ENCODE measurements at regions of chr2 and their contacts with region 1.

Region 1: GRCh38 chr2:178796079-178796677 is 11.0 kb downstream of the TTN start:
- DNase-seq: peak in 1 of 2 experiments; percentile 65
- H3K4me3 ChIP-seq: no peak overlapping the region
- H3K27ac ChIP-seq: no peak overlapping the region
- H3K4me1 ChIP-seq: no peaks in the 10 kb centered on the region
- H3K27me3 ChIP-seq: no peaks in the 10 kb centered on the region
- CTCF ChIP-seq: peak; percentile 97

Region 2: DNA sequence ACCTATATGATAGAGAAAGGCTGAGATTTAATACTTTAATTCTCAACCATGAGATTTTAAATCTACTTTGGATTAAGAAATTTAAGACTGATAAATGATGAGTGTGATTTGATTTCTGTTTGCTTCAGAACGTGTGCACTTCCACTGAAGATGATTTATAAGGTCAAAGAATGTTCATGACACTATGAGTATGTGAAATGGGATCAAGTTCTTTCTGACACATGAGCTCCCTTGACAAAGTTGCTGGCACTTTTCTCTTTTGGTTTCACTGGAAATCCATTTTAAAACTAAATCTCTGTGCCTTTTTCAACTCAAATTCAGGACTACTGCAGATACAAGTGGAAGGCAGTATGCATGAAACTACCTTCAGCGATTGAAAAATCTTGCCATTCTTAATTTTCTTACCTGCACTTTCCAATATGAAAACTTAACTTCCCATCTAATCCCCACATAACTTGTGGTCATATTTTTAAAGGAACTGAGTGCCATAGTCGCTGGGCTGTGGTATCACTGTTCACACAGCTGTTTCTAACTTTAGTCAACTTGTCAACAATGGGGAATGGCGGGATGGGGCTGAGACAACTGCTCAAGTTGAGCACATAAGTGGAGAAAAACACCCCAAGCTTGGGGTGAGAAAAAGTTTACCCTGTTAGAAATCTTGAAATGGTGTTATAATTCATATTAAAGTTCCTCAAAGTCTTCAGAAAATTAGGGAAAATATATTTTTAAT is 62.9 kb after region 1 on chr2:
- CTCF ChIA-PET with region 1: no interaction called
- POLR2A ChIA-PET with region 1: no interaction called
- intact Hi-C with region 1: no loop called
- DNase-seq: no peak
- H3K4me3 ChIP-seq: no peak overlapping the region
- H3K27ac ChIP-seq: no peak overlapping the region
- H3K4me1 ChIP-seq: peaks cover 10% of the 10 kb centered on the region
- H3K27me3 ChIP-seq: no peaks in the 10 kb centered on the region
- CTCF ChIP-seq: no peak

Region 3: DNA sequence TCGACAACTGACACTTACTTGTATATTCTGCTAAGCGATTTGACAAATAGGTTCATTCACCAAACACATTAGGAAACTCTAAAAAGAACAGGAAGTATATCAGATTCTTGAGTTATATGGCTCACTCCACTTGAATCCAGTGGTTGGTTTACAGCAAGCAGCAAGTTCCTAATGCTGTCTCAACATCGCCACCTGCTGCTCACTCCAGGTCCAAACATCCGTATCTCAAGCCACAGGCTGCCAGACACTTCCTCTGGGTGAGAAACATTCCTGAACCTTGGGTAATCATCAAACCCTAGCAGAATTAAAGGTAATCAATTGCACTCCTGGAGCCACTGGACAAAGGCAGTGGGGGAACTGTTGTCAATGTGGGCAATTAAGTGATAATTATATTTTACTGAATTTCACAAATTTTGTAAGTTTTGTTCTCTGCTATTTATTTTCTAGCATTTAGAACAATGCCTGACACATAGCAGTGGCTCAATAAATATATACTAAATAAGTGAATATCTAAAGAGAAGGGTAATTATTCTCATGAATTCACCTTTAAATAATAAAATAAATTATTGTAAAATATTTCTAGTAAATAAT is 118.2 kb after region 1 on chr2:
- CTCF ChIA-PET with region 1: interaction called, 5 read pairs
- POLR2A ChIA-PET with region 1: no interaction called
- intact Hi-C with region 1: loop called (anchors 1 kb)
- DNase-seq: peak; percentile 83 to 84
- H3K4me3 ChIP-seq: no peak overlapping the region
- H3K27ac ChIP-seq: no peak overlapping the region
- H3K4me1 ChIP-seq: peaks cover 30% of the 10 kb centered on the region
- H3K27me3 ChIP-seq: no peaks in the 10 kb centered on the region
- CTCF ChIP-seq: peak; percentile 99

Region 4: DNA sequence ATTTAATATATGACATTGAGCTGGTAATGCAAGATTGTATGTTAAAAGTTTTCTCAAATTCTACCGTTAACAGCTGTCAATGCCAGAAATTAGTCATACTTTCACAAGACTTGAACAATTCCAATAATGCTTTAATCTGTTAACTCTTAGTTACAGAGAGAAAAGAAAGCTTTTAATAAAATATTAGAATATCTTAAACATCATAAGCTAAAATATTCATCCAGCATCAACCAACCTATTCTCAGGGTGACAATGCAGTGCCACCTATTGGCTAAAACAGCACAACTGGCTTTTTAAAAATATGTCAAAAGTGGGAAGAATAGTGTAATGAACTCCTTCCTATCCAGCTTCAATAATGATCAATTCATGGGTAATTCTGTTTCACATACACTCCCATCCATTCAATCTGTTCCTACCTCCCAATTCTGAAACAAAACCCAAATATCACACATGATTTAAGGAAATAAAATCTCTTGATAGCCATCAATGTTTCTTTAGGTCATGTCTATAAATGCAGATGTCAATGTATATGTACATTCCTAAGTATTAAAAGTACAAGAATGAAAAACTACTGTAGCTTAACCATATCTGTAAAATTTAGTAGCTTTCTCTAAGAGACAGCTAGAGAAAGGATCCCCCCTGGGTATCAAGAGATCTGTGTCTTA is 333.5 kb after region 1 on chr2:
- CTCF ChIA-PET with region 1: interaction called, 9 read pairs
- POLR2A ChIA-PET with region 1: no interaction called
- intact Hi-C with region 1: loop called (anchors 5 kb)
- DNase-seq: no peak
- H3K4me3 ChIP-seq: no peak overlapping the region
- H3K27ac ChIP-seq: no peak overlapping the region
- H3K4me1 ChIP-seq: no peaks in the 10 kb centered on the region
- H3K27me3 ChIP-seq: no peaks in the 10 kb centered on the region
- CTCF ChIP-seq: peak; percentile 83

Region 5: GRCh38 chr2:179440642-179441251 is 644.6 kb after region 1 on chr2:
- CTCF ChIA-PET with region 1: no interaction called
- POLR2A ChIA-PET with region 1: no interaction called
- intact Hi-C with region 1: loop called (anchors 2 kb)
- DNase-seq: peak in 1 of 2 experiments; percentile 55
- H3K4me3 ChIP-seq: no peak overlapping the region
- H3K27ac ChIP-seq: no peak overlapping the region
- H3K4me1 ChIP-seq: no peaks in the 10 kb centered on the region
- H3K27me3 ChIP-seq: no peaks in the 10 kb centered on the region
- CTCF ChIP-seq: peak; percentile 96

Region 6: GRCh38 chr2:179936654-179937053 is 1140.5 kb after region 1 on chr2:
- CTCF ChIA-PET with region 1: no interaction called
- POLR2A ChIA-PET with region 1: no interaction called
- intact Hi-C with region 1: loop called (anchors 1 kb)
- DNase-seq: peak in 1 of 2 experiments; percentile 34
- H3K4me3 ChIP-seq: no peak overlapping the region
- H3K27ac ChIP-seq: no peak overlapping the region
- H3K4me1 ChIP-seq: no peaks in the 10 kb centered on the region
- H3K27me3 ChIP-seq: no peaks in the 10 kb centered on the region
- CTCF ChIP-seq: peak; percentile 72

Measured in PC-9 (cell line).